ENCODE measurements at regions of chr7 and their contacts with region 1.

Region 1: DNA sequence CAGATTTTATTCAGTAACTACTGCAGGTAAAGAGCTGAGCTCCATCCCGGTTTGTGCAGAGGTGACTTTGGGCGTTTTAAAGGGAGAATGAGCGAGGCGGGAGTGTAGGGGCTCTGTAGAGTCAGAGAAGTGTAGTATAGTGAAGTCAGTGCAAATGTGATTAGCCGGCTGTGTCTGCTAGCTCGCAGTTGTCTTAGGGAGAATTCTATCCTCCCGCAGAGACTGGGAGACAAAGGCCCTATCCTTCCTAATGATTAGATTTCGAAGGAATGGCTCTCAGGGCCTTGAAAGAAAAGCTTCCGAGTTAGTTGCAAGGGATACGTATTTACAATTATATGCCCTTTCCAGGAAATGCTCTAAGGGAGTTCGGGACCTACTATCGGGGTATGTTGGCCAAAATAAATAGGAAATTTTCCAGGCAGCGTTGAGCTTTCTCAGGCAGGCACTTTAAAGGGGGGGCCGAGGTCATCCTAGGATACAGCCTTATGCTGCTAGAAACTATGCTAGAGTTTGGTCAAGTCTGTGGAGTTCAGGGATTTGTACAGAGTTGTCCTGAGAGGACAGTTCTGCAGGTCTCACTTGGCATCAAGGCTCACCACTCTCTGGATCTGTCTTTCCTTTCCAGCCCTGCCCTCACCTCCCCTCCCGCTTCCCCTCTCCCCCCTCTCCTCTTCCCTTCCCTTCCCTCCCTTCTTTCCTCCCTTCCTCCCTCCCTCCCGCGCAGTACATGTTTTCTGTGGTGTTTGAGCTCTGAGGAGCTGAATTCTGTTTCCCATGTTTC is 825 bp downstream of the MRPL32 start:
- DNase-seq: no peak
- ATAC-seq: peak; percentile 28; the same call in 1 of the 2 replicates
- H3K4me3 ChIP-seq: peak overlapping the region; percentile 94 to 95
- H3K27ac ChIP-seq: peak overlapping the region; percentile 97
- H3K4me1 ChIP-seq: peaks cover 27% of the 10 kb centered on the region
- H3K27me3 ChIP-seq: no peaks in the 10 kb centered on the region
- CTCF ChIP-seq: no peak

Region 2: DNA sequence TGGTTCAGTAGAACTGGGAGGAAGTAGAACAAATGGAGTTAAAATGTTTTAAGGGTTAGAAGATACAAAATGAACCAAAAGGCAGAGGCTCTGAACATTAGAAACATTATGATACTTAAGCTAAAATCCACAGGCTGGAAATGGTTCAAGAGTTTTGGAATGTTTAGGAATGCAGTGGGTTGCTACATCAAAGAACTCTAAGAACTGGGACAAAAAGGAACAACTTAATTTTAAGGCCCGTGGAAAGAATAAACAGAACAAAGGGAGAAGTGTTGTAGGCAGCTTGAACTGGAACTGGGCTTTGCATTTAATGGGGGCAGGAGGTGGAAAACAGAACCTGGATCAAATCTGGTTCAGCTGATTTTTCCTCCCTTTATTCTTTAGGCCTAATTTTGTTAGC is 17.6 kb before region 1 on chr7:
- CTCF ChIA-PET with region 1: interaction called, 10 read pairs
- POLR2A ChIA-PET with region 1: interaction called, 3 read pairs
- in situ Hi-C with region 1: no loop called
- intact Hi-C with region 1: no loop called
- DNase-seq: no peak
- ATAC-seq: no peak
- H3K4me3 ChIP-seq: no peak overlapping the region
- H3K27ac ChIP-seq: no peak overlapping the region
- H3K4me1 ChIP-seq: peaks cover 10% of the 10 kb centered on the region
- H3K27me3 ChIP-seq: no peaks in the 10 kb centered on the region
- CTCF ChIP-seq: no peak

Region 3: DNA sequence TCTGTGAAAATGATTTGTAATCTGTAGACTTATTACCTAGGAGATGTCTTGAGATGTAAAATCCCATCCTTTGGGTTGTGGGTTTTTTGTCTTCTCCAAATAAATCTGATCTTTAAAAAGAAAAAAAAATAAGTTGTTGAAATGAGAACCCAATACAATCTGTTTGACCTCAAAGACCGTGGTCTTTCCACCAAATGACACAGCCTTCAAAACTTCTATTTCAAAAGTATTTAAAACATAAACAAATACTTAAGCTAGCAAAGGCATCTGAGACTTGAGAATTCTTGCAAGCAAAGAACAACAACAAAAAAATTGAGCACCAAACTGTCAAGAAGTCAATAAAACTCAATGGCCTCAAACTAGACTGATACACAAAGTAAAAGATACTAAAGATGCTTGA is 111.5 kb after region 1 on chr7:
- CTCF ChIA-PET with region 1: no interaction called
- POLR2A ChIA-PET with region 1: interaction called, 16 read pairs
- in situ Hi-C with region 1: no loop called
- intact Hi-C with region 1: no loop called
- DNase-seq: no peak
- ATAC-seq: no peak
- H3K4me3 ChIP-seq: no peak overlapping the region
- H3K27ac ChIP-seq: no peak overlapping the region
- H3K4me1 ChIP-seq: no peaks in the 10 kb centered on the region
- H3K27me3 ChIP-seq: 0 out of 2 replicates have a peak, but pooled peaks cover 3% of the 10 kb centered on the region
- CTCF ChIP-seq: no peak

Measured in Panc1 (cell line).